GM23248 (cell line): ENCODE measurements at regions of chr11 and their contacts with region 1.

Region 1: GRCh38 chr11:6345366-6345765 is 25.1 kb upstream of the CAVIN3 start:
- DNase-seq: peak; percentile 4
- H3K4me3 ChIP-seq: no peak overlapping the region
- H3K27ac ChIP-seq: no peak overlapping the region
- H3K4me1 ChIP-seq: no peaks in the 10 kb centered on the region
- H3K27me3 ChIP-seq: no peaks in the 10 kb centered on the region

Region 2: DNA sequence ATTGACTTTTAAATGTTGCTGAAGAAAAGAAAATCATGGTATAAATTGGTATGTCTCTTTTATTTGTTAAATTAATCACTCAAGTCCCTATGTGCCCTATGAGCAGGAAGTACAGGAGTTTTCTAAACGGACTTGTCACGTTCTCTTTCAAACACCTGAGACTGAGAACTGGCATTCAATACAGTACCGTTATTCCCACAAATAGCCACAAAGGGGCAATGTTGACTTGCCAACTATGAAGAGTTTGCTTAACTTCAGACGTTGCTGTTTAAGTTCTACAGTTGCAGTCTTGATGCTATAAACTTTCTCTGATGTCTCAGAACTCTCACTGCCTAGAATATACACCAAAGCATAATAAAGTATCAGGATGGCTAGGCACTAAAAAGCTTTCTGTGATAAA is 322.4 kb before region 1 on chr11:
- in situ Hi-C with region 1: loop called (anchors 10 kb)
- DNase-seq: peak; percentile 71
- H3K4me3 ChIP-seq: no peak overlapping the region
- H3K27ac ChIP-seq: no peak overlapping the region
- H3K4me1 ChIP-seq: no peaks in the 10 kb centered on the region
- H3K27me3 ChIP-seq: peaks cover 4% of the 10 kb centered on the region; the same call in 1 of the 2 replicates

Region 3: DNA sequence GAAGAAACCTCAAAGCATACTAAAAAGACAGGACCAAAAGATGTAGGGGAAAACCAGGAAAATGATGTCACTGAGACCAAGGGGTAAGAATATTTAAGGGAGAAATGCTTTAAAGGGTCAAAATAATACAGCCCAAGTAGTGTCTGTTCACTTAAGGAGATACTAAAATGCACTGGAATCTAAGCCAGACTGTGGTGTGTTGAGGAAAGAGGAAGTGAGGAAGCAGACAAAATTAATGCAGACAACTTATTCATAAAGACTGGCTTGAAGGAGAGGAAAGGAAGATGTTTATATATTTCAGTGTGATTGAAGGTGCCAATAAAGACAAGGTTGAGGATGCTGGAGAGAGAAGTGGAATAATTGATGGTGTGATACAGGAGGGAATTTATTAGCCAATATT is 596.6 kb after region 1 on chr11:
- in situ Hi-C with region 1: no loop called
- DNase-seq: no peak
- H3K4me3 ChIP-seq: no peak overlapping the region
- H3K27ac ChIP-seq: no peak overlapping the region
- H3K4me1 ChIP-seq: no peaks in the 10 kb centered on the region
- H3K27me3 ChIP-seq: no peaks in the 10 kb centered on the region